ENCODE measurements at regions of chr2 and their contacts with region 1.

Region 1: DNA sequence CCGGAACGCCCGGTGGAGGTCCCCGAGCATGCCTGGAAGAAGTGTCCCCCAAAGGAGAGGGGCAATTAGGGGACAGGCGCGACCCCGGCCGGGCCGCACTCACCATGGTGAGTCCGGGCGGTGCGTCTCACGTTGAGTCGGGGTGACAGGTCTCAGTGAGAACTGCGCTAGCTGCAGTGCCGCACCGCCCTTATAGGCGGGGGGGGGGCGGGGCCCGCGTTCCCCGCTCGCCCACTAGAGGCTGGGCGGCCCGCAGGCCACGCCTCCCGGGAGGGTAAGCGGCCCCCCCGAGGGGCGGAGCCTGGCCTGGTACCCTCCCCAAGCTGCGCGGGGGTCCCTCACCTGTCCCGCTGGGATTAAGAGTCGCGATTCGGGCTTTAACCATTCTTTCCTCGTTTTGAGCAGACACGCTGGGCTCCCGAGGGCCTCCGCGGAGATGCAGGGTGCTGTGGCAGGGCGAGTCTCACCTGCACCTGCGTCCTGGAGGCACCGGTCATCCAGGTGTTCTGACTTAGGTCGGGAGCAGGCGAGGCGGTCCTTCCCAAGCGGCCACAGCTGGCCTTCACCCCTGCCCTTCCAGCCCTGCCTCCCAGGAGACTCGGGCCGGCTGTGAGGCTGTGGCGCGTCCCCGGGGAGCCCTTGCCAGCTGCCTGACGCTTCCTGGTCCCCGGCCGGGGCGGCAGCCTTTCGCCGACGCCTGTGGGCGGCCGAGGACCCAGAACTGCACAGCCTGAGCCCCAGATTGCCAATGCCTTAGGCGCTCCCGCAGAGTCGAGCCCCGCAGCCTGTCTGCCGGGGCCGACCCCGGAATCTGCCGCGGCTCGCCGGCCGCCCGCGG is at the start of gene TUBA4A:
- DNase-seq: peak; percentile 58
- ATAC-seq: peak; percentile 62
- H3K4me3 ChIP-seq: peak within 1 kb of the TSS; percentile 62 to 83 (median 62)
- H3K27ac ChIP-seq: no peak within 1 kb of the TSS
- H3K4me1 ChIP-seq: peaks cover 60% of the 10 kb centered on the region
- H3K27me3 ChIP-seq: peaks cover 2 to 40% of the 10 kb centered on the region in 2 experiments; a peak in 4 of 5 replicates
- CTCF ChIP-seq: peak; percentile 6; the same call in 1 of the 2 replicates
- EP300 ChIP-seq: no peak
- POLR2A ChIP-seq: peak in 1 of 2 experiments; percentile 48; a peak in 1 of 4 replicates
- RAD21 ChIP-seq: no peak
- total RNA-seq, gene TUBA4A: 0.97 and 1.3 TPM in 2 replicates

Region 2: GRCh38 chr2:219269362-219270054 is 15.5 kb after region 1 on chr2:
- CTCF ChIA-PET with region 1: no interaction called
- POLR2A ChIA-PET with region 1: interaction called, 22 read pairs
- in situ Hi-C with region 1: no loop called
- intact Hi-C with region 1: no loop called
- DNase-seq: peak; percentile 54
- ATAC-seq: peak; percentile 76
- H3K4me3 ChIP-seq: 0 out of 6 replicates have a peak overlapping the region, but pooled peaks of 1 of the 3 experiments have one; percentile 29
- H3K27ac ChIP-seq: peak overlapping the region; percentile 3
- H3K4me1 ChIP-seq: peaks cover 37% of the 10 kb centered on the region
- H3K27me3 ChIP-seq: peaks cover 2 to 24% of the 10 kb centered on the region in 2 experiments; a peak in 3 of 5 replicates
- CTCF ChIP-seq: no peak
- EP300 ChIP-seq: 0 out of 4 replicates have a peak, but pooled peaks of 1 of the 2 experiments have one; percentile 14
- POLR2A ChIP-seq: no peak
- RAD21 ChIP-seq: no peak

Region 3: GRCh38 chr2:219308142-219309093 is 54.4 kb after region 1 on chr2:
- CTCF ChIA-PET with region 1: no interaction called
- POLR2A ChIA-PET with region 1: no interaction called
- in situ Hi-C with region 1: no loop called
- intact Hi-C with region 1: no loop called
- DNase-seq: peak; percentile 41
- ATAC-seq: peak; percentile 97
- H3K4me3 ChIP-seq: no peak overlapping the region
- H3K27ac ChIP-seq: no peak overlapping the region
- H3K4me1 ChIP-seq: no peaks in the 10 kb centered on the region
- H3K27me3 ChIP-seq: peaks cover 1 to 19% of the 10 kb centered on the region in 2 experiments; a peak in 3 of 5 replicates
- CTCF ChIP-seq: peak; percentile 33
- EP300 ChIP-seq: no peak
- POLR2A ChIP-seq: no peak
- RAD21 ChIP-seq: 0 out of 2 replicates have a peak, but pooled peaks have one; percentile 27